ENCODE measurements at regions of chr9 and their contacts with region 1.

Region 1: GRCh38 chr9:34332076-34332964 is 3.0 kb downstream of the NUDT2 start:
- DNase-seq: no peak
- ATAC-seq: no peak
- H3K4me3 ChIP-seq: no peak overlapping the region
- H3K27ac ChIP-seq: no peak overlapping the region
- H3K4me1 ChIP-seq: no peaks in the 10 kb centered on the region
- H3K27me3 ChIP-seq: no peaks in the 10 kb centered on the region

Region 2: DNA sequence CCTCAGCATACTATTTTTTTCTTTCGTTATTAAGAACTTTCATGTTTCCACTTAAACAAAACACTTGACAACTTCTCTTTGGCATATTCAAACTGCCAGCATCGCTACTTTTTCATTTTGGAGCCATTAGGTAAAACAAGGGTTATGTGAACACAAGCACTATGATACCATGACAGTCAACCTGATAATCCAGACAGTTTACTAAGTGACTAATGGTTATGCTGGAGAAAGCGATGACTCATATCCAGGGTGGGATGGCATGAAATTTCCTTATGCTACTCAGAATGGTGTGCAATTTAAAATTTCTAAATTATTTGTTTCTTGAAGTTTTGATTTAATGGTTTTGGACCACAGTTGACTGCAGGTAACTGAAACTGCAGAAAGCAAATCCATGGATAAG is 566.9 kb before region 1 on chr9:
- intact Hi-C with region 1: no loop called
- DNase-seq: no peak
- ATAC-seq: no peak
- H3K4me3 ChIP-seq: no peak overlapping the region
- H3K27ac ChIP-seq: no peak overlapping the region
- H3K4me1 ChIP-seq: no peaks in the 10 kb centered on the region
- H3K27me3 ChIP-seq: no peaks in the 10 kb centered on the region

Region 3: DNA sequence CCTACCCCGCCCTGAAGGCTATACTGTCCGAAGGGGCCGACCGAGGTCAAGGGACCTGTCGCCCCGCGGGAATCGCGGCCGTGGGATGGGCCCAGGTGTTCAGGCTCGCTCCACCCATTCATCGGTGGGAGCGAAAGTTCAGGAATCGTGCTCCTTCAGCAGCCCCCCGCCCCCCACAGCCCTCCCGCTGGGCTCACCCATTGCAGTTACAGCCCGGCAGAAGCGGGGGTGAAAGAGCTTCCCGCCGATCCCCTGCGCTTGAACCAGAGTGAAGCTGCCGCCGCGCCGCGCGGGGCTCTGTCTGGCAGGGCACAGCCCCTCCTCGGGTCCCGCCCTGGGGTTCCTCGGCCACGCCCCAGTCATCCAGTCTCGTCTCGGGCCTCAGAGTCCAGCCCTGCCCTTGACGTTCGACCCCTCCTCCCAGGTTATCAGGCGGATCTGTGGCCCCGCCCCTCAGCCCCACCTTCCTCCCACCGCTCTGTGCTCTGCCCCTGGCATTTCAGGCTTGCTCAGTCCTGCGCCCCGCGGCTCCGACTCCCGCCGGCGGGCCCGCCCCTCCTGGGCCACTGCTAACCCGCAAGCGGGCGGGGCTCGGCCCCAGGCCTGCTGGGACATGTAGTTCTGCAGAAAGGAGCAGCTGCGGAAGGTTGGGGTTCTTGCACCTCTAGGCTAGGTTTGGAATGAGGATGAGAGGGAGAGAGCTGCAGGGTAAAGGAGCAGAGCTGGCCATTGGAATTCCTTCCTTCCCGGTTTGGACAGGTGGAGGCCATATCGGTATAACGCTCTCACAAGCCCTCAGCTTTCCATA is 44.5 kb after region 1 on chr9 and contains the start of gene MYORG:
- intact Hi-C with region 1: loop called (anchors 2 to 5 kb)
- DNase-seq: peak; percentile 92 to 97 (median 96)
- ATAC-seq: peak; percentile 86 to 87
- H3K4me3 ChIP-seq: peak within 1 kb of the TSS; percentile 67
- H3K27ac ChIP-seq: peak within 1 kb of the TSS; percentile 37
- H3K4me1 ChIP-seq: peaks cover 2% of the 10 kb centered on the region
- H3K27me3 ChIP-seq: no peaks in the 10 kb centered on the region
- total RNA-seq, gene MYORG: 4.6 to 5.2 (median 4.8) TPM

Region 4: GRCh38 chr9:34430843-34431437 is 98.6 kb after region 1 on chr9:
- intact Hi-C with region 1: no loop called
- DNase-seq: peak; percentile 76 to 93 (median 93)
- ATAC-seq: peak; percentile 89 to 95
- H3K4me3 ChIP-seq: no peak overlapping the region
- H3K27ac ChIP-seq: no peak overlapping the region
- H3K4me1 ChIP-seq: peaks cover 6% of the 10 kb centered on the region
- H3K27me3 ChIP-seq: no peaks in the 10 kb centered on the region

Region 5: GRCh38 chr9:34500623-34501267 is 168.4 kb after region 1 on chr9:
- intact Hi-C with region 1: loop called in 1 of 4 experiments (anchors 2 kb)
- DNase-seq: peak; percentile 44 to 77 (median 73)
- ATAC-seq: peak; percentile 20 to 52
- H3K4me3 ChIP-seq: no peak overlapping the region
- H3K27ac ChIP-seq: no peak overlapping the region
- H3K4me1 ChIP-seq: peaks cover 6% of the 10 kb centered on the region
- H3K27me3 ChIP-seq: no peaks in the 10 kb centered on the region

Region 6: DNA sequence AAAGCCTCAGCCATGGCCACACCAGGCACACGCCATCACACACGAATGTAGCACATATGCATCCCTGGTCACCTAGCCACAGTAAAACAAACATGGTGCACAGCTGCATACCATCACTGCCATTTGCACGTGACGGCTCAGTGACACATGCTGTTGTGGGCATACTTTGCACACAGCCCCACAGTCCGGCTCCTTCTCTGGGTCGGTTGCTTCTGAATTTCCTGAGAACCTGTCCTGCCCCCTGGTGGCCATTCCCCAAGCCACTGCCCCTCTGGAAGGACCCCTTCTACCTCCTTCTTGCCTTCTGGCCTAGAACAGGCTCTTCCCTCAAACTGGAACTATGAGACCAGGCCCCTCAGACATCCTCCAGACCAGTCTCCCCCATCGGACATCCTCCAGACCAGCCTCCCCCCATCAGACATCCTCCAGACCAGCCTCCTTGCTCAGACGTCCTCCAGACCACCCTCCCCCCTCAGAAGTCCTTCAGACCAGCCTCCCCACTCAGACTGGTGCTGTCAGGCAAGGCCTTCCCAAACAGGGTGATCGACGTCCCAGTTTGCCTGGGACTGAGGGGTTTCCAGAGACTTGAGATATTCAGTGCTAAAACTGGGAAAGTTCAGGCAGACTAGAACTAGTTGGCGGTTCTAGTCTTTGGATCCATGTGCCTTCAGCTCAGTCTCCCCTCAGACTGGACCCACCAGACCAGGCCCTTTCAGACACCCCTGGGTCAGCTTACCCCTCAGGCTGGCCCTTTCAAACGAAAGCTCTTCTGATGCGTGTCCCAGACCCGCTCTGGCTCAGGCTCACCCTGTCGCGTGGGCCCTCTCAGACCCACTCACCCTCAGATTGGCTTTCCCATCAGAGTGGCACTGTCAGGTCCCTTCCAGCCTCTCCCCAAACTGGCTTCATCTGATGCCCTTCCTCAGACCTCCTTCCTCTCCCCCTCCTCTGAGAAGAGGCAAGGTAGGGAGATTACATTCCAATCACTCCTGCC is 214.8 kb after region 1 on chr9:
- intact Hi-C with region 1: loop called in 1 of 4 experiments (anchors 5 kb)
- DNase-seq: peak; percentile 75 to 88 (median 82)
- ATAC-seq: peak; percentile 59 to 73
- H3K4me3 ChIP-seq: no peak overlapping the region
- H3K27ac ChIP-seq: no peak overlapping the region
- H3K4me1 ChIP-seq: no peaks in the 10 kb centered on the region
- H3K27me3 ChIP-seq: no peaks in the 10 kb centered on the region

Region 7: DNA sequence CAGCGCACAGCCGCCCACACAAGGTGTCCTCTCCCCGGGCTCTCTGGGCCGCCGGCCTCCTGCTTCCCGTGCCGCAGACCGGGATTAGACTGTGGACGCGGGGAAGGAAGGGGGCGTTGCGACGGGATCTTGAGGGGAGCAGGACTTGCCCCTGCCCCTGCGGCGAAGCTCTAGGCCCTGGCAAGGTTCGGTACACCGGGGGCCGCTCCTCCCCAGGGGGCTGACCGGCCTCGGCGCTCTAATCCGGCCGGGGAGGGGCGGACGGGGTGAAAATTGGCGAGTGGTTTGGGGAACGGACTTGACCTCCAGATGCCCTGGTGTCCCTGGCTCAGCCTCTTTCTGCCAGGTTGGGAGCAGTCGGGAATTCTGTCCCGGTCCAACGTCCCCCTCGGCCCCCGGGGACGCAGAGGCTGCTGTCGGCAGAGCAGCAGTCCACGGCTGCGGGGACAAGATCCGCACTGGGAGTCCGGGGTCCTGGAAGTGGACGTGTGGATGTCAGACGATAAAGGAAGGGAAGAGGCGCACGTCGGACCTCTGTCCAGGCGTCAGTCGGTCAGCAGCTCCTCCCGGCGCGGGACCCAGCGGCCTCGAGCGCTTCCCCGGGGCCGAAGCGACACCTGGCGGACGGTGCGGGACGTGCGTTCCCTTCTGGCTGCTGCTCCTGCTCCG is 259.1 kb after region 1 on chr9:
- intact Hi-C with region 1: loop called in 1 of 4 experiments (anchors 10 kb)
- DNase-seq: peak; percentile 88 to 96 (median 96)
- ATAC-seq: peak; percentile 73 to 85
- H3K4me3 ChIP-seq: peak overlapping the region; percentile 18
- H3K27ac ChIP-seq: peak overlapping the region; percentile 21
- H3K4me1 ChIP-seq: peaks cover 7% of the 10 kb centered on the region
- H3K27me3 ChIP-seq: no peaks in the 10 kb centered on the region

Region 8: DNA sequence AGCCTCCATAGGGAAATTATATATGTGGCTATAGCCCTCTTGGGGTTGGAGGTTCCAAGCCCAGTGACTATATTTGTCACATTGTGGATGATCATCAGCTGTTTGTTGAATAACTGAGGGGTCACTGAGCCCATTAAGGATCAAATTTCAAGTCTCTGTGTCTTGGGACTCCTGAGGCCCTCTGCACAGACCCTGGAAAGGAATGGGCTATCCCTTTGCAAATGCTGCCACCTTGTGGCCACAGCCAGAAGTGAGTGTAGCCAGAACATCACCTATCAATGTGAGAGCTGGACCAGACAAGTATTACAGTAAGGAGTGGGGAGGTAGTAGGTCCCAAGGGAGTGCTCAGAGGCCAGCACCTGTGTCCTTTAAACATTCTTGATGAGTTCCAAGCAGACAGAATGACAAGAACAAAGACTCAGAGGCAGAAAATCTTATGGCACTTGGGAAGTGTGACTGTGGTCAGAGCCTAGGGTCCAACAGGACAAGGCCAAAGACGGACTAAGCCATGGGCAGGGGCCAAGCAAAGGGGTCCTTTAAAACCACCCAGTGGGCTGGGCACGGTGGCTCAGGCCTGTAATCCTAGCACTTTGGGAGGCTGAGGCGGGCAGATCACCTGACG is 271.4 kb after region 1 on chr9:
- intact Hi-C with region 1: loop called in 2 of 4 experiments (anchors 10 kb)
- DNase-seq: peak; percentile 79 to 96 (median 90)
- ATAC-seq: peak; percentile 86 to 89
- H3K4me3 ChIP-seq: no peak overlapping the region
- H3K27ac ChIP-seq: no peak overlapping the region
- H3K4me1 ChIP-seq: peaks cover 3% of the 10 kb centered on the region
- H3K27me3 ChIP-seq: no peaks in the 10 kb centered on the region

Region 9: GRCh38 chr9:34611829-34612630 is 279.7 kb after region 1 on chr9 and contains the start of gene RPP25L:
- intact Hi-C with region 1: loop called in 2 of 4 experiments (anchors 10 kb)
- DNase-seq: peak; percentile 91 to 96 (median 95)
- ATAC-seq: peak; percentile 96 to 97
- H3K4me3 ChIP-seq: peak within 1 kb of the TSS; percentile 89
- H3K27ac ChIP-seq: peak within 1 kb of the TSS; percentile 97
- H3K4me1 ChIP-seq: peaks cover 10% of the 10 kb centered on the region
- H3K27me3 ChIP-seq: no peaks in the 10 kb centered on the region
- total RNA-seq, gene RPP25L: 17.8 to 34.5 (median 31.3) TPM

Measured in right cardiac atrium (tissue), 5 donors.